ENCODE measurements at regions of chr14 and their contacts with region 1.

Region 1: GRCh38 chr14:81464247-81465002 is 64.3 kb upstream of the STON2 start:
- DNase-seq: peak; percentile 61
- H3K4me3 Mint-ChIP-seq: peak overlapping the region; percentile 74
- H3K27ac Mint-ChIP-seq: peak overlapping the region; percentile 86
- H3K4me1 Mint-ChIP-seq: peaks cover 14% of the 10 kb centered on the region
- H3K27me3 Mint-ChIP-seq: no peaks in the 10 kb centered on the region

Region 2: GRCh38 chr14:81269100-81269978 is 195.1 kb before region 1 on chr14:
- CTCF ChIA-PET with region 1: interaction called, 54 read pairs
- POLR2A ChIA-PET with region 1: no interaction called
- DNase-seq: no peak
- H3K4me3 Mint-ChIP-seq: no peak overlapping the region
- H3K27ac Mint-ChIP-seq: no peak overlapping the region
- H3K4me1 Mint-ChIP-seq: peaks cover 10% of the 10 kb centered on the region
- H3K27me3 Mint-ChIP-seq: peaks cover 27% of the 10 kb centered on the region

Region 3: DNA sequence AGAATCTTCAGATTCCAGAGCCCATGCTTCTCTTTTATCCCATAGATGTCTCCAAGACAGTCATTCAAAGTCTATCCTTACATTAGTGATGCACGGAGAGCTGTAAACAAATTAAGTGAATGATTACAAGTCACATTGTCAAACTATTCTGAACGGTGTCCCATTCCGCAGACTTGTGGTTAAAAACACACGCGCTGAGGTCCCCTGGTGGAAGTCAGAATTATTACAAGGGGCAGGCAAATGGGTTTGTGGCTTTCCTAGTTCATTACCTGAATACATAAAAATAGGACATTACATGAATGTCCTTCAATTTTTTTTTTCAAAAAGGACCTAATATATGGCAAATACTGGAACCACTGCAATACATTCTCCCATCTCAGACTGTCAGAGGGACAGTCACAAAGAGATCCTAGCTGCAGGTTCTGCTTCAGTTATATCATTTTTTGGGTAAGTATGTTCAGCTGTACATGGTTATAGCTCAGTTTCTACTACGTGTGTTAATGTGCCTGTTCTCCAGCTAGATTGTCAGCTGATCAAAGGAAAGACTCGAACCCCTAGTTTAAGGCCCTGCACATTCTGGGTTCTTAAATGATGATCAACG is 11.2 kb before region 1 on chr14:
- CTCF ChIA-PET with region 1: interaction called, 29 read pairs
- POLR2A ChIA-PET with region 1: no interaction called
- DNase-seq: peak; percentile 60
- H3K4me3 Mint-ChIP-seq: no peak overlapping the region
- H3K27ac Mint-ChIP-seq: no peak overlapping the region
- H3K4me1 Mint-ChIP-seq: peaks cover 5% of the 10 kb centered on the region
- H3K27me3 Mint-ChIP-seq: peaks cover 20% of the 10 kb centered on the region

Region 4: DNA sequence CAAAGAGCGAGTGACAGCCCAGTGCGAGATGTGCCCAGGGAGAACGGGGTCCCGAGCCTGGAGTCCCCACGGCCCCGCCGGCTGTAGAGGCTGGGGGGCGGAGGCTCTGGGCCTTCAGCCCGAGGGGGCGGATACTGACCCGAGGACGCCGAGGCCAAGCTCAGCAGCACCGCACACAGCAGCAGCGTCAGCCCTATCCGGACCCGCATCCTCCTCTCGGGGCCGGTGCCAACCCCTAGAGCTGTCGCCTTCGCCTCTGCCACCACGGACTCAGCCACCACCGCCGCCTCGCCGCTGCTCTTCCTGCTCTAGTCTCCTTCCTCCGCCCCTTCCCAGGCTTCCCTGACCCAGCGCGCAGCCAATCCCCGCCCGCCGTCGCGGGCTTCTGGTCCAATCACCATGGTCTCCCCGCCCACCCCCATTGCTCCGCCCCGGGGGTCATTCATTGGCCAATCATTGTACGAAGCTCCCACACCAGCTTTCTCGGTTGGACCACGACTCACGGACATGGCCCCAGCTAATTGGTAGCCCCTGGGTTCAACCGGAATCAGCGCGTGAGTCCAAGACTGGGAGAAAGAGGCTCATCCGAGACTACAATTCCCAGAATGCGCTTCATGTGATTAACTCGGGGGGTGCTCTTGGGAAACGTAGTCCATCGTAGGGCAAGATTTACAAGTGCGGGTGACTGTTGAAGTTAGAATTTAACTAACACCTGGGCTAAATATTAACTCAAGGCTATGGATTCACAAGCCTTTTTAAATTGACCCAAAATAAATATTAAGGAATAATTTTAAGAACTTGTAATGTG is 69.3 kb after region 1 on chr14 and contains the start of gene SEL1L:
- CTCF ChIA-PET with region 1: interaction called, 11 read pairs
- POLR2A ChIA-PET with region 1: interaction called, 13 read pairs
- DNase-seq: peak; percentile 100
- H3K4me3 Mint-ChIP-seq: peak within 1 kb of the TSS; percentile 98
- H3K27ac Mint-ChIP-seq: peak within 1 kb of the TSS; percentile 79
- H3K4me1 Mint-ChIP-seq: peaks cover 51% of the 10 kb centered on the region
- H3K27me3 Mint-ChIP-seq: no peaks in the 10 kb centered on the region
- total RNA-seq, gene SEL1L: 65.9 to 67.6 TPM